ENCODE measurements at regions of chr3 and their contacts with region 1.

Region 1: DNA sequence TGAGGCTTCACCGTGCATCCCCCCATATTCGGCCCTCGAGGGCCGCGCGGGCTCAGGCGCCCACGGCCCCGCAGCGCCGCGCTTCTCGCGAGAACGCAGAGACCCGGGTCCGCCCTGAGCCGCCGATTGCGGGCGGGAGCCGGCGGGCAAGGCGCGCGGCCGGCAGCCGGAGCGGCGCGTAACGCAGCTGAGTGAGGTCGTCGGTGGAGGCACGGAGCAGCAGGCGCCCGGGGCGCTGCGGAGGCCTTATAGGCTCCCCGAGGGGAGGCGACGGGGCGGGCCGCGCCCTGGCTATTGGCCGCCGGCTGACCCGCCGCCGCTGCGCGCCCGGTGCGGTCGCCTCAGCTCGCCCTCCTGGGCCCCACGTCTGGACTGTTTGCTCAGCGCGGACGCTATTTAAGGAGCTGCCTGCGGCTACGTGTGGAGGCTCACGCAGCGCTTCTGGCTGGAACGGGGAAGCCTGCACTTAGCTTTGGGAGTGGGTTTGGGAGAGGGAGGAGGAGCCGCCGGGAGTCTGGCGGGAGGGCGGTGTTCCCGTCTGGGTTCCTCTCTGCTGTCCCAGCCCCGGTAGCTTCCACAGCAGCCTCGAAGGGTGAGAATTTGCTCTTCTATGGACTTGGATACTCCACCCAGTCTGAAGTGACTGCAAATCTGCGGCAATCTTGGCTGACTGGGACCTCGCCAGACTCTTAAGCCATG is at the start of gene PLOD2:
- DNase-seq: peak; percentile 63 to 78
- H3K4me3 ChIP-seq: peak within 1 kb of the TSS; percentile 64
- H3K4me1 ChIP-seq: peaks cover 34% of the 10 kb centered on the region
- H3K27me3 ChIP-seq: no peaks in the 10 kb centered on the region

Region 2: DNA sequence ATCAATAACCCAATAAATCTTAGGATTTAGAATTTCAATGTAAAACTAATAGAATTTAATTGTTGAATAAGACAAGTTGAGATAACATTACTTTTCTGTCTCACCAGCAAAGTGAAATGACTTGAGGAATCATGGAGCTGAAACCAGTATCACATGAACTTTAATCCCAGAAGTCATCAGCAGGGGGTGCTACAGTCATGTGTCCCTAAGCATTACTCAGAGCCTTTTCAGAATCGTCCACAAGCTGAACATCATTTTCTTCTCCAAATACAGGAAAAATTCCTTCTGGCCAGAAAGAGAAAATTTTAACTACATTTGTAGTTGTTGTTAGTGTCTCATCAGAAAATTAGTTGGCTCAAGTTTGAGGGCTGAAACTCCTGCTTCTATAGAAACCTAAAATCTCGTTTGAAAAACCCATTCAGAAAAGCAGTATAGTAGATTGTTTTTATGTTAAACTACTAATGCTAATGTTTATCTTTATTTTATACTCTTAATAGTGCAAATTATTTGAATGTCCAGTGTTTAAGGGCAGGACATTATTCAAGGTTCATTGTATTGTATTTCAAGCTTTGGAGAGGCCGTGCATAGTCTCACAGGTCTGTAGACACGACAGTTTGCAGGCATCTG is 384.2 kb before region 1 on chr3:
- in situ Hi-C with region 1: loop called (anchors 25 kb)
- DNase-seq: peak; percentile 60 to 85
- H3K4me3 ChIP-seq: no peak overlapping the region
- H3K4me1 ChIP-seq: no peaks in the 10 kb centered on the region; the same call in 1 of the 2 replicates
- H3K27me3 ChIP-seq: no peaks in the 10 kb centered on the region

Region 3: DNA sequence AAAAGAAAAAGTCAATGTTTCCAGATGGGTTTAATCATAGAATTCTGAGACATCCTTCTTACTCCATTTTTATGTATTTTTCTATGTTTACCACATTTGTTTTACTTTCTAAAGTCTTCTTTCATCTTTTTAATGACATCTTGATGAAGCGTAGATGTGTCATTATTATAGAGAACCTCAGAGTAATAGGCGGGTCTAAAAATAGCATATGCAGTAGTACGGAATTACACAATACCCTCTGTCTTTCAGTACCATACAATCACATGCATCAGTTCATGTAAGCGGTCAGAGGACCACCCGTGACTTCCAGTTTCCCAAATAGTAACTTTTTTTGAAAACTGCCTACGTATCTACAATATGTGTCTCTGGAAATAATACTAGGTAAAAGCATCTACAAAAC is 224.1 kb before region 1 on chr3:
- in situ Hi-C with region 1: no loop called
- DNase-seq: peak in 1 of 2 experiments; percentile 65
- H3K4me3 ChIP-seq: no peak overlapping the region
- H3K4me1 ChIP-seq: peaks cover 20% of the 10 kb centered on the region
- H3K27me3 ChIP-seq: no peaks in the 10 kb centered on the region

Region 4: DNA sequence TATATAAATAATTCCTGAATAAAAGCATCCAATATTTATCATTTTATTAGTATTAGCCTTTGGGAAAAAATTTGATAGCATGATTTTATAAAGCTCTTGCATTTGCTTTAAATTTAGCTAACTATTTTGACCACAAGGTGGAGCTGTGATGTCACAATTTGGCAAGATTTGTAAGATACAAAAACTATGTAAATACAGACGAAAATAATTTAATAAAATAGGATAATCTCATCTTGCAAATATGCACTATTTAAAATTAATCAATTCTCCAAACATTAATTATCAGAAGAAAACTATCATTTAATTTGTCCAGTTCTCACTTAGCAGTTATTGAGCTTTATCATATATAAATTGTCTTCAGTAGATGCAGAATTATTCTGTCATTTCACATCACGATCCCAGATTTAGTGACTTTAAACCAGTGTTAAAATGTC is 95.5 kb before region 1 on chr3:
- in situ Hi-C with region 1: loop called (anchors 25 kb)
- DNase-seq: peak; percentile 29 to 52
- H3K4me3 ChIP-seq: no peak overlapping the region
- H3K4me1 ChIP-seq: no peaks in the 10 kb centered on the region; the same call in 1 of the 2 replicates
- H3K27me3 ChIP-seq: no peaks in the 10 kb centered on the region

Region 5: GRCh38 chr3:146517684-146518435 is 356.7 kb after region 1 on chr3:
- in situ Hi-C with region 1: no loop called
- DNase-seq: no peak
- H3K4me3 ChIP-seq: no peak overlapping the region
- H3K4me1 ChIP-seq: peaks cover 9% of the 10 kb centered on the region
- H3K27me3 ChIP-seq: no peaks in the 10 kb centered on the region